Transverse colon (tissue), 4 donors: ENCODE measurements at regions of chr9 and their contacts with region 1.

Region 1: GRCh38 chr9:4640027-4640426 is 22.1 kb upstream of the PLPP6 start:
- DNase-seq: peak; percentile 14
- H3K4me3 ChIP-seq: no peak overlapping the region
- H3K27ac ChIP-seq: no peak overlapping the region
- H3K4me1 ChIP-seq: no peaks in the 10 kb centered on the region
- H3K27me3 ChIP-seq: no peaks in the 10 kb centered on the region
- CTCF ChIP-seq: peak; percentile 33 to 44 (median 40)
- EP300 ChIP-seq: no peak
- POLR2A ChIP-seq: no peak

Region 2: GRCh38 chr9:4382722-4383317 is 257.2 kb before region 1 on chr9:
- in situ Hi-C with region 1: loop called (anchors 10 to 25 kb)
- intact Hi-C with region 1: loop called (anchors 5 kb)
- DNase-seq: no peak
- H3K4me3 ChIP-seq: no peak overlapping the region
- H3K27ac ChIP-seq: no peak overlapping the region
- H3K4me1 ChIP-seq: no peaks in the 10 kb centered on the region
- H3K27me3 ChIP-seq: no peaks in the 10 kb centered on the region
- CTCF ChIP-seq: peak; percentile 39 to 59 (median 50)
- EP300 ChIP-seq: no peak
- POLR2A ChIP-seq: no peak

Region 3: DNA sequence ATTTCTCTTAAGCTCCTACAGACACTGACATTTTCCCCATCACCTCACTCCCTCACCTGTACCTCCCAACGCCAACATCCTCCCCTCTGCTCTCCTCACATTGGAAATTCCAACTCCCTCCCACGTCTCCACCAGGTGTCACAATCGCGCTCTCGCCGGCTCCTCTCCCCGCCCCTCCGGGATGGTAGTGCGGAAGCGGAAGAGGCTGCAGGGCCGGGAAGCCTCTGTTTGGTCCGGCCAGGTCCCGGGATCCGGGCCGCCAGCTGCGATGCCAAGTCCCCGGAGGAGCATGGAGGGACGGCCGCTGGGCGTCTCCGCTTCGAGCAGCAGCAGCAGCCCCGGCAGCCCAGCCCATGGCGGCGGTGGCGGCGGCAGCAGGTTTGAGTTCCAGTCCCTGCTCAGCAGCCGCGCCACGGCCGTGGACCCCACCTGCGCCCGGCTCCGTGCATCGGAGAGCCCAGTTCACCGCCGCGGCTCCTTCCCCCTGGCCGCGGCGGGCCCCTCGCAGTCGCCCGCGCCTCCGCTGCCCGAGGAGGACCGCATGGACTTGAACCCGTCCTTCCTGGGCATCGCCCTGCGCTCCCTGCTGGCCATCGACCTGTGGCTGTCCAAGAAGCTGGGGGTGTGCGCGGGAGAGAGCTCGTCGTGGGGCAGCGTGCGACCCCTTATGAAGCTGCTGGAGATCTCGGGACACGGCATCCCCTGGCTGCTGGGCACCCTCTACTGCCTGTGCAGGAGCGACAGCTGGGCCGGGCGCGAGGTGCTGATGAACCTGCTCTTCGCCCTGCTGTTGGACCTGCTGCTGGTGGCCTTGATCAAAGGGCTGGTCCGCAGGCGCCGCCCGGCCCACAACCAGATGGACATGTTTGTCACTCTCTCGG is 22.3 kb after region 1 on chr9 and contains the start of gene PLPP6:
- in situ Hi-C with region 1: no loop called
- intact Hi-C with region 1: no loop called
- DNase-seq: peak; percentile 93
- H3K4me3 ChIP-seq: peak within 1 kb of the TSS; percentile 62 to 99 (median 82)
- H3K27ac ChIP-seq: peak within 1 kb of the TSS; percentile 87 to 94 (median 92)
- H3K4me1 ChIP-seq: peaks cover 3 to 54% (median 30%) of the 10 kb centered on the region in 4 donors
- H3K27me3 ChIP-seq: no peaks in the 10 kb centered on the region
- CTCF ChIP-seq: peak; percentile 46 to 71 (median 55)
- EP300 ChIP-seq: no peak
- POLR2A ChIP-seq: peak; percentile 87
- total RNA-seq, gene PLPP6: 7.1 to 22.7 (median 16.3) TPM

Region 4: DNA sequence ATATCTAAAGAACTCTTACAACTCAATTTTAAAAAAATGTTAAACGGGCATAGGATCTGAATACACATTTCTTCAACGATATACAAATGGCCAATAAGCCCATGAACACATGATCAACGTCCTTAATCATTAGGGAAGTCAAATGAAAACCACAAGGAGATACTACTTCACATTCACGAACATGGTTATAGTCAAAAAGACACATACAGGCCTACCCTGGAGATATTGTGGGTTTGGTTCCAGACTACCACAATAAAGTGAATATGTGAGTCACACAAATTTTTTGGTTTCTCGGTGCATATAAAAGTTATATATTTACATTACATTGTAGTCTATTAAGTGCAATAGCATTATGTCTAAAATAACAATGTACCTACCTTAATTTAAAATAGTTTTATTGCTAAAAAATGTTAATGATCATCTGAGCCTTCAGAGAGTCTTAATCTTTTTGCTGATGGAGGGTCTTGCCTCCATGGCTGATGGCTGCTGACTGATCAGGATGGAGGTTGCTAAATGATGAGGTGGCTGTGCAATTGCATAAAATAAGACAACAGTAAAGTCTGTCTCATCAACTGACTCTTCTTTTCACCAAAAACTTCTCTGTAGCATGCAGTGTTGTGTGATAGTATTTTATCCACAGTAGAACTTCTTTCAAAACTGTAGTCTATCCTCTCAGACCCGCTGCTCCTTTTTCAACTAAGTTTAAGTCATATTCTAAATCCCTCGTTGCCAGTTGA is 85.8 kb after region 1 on chr9:
- in situ Hi-C with region 1: no loop called
- intact Hi-C with region 1: no loop called
- DNase-seq: no peak
- H3K4me3 ChIP-seq: no peak overlapping the region
- H3K27ac ChIP-seq: no peak overlapping the region
- H3K4me1 ChIP-seq: no peaks in the 10 kb centered on the region
- H3K27me3 ChIP-seq: no peaks in the 10 kb centered on the region
- CTCF ChIP-seq: no peak
- EP300 ChIP-seq: no peak
- POLR2A ChIP-seq: no peak

Region 5: DNA sequence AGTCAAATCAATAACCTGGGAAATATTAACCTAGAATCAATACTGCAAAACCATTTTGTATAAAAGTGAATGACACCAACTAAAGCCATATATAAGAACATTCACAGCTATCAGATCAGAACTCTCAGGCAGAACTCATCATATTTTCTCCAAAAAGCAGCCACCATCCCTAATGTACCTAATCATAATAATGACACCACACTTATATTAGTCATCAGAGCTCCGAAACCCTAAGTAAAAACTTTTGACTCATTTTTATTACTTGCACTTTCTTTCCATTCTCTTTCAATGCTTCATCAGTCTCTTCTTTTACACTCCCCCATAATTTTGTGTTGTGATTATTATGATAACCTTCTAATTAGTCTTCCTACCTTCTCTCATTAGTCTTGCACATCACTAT is 500.1 kb after region 1 on chr9:
- in situ Hi-C with region 1: no loop called
- intact Hi-C with region 1: no loop called
- DNase-seq: no peak
- H3K4me3 ChIP-seq: no peak overlapping the region
- H3K27ac ChIP-seq: no peak overlapping the region
- H3K4me1 ChIP-seq: no peaks in the 10 kb centered on the region
- H3K27me3 ChIP-seq: no peaks in the 10 kb centered on the region
- CTCF ChIP-seq: no peak
- EP300 ChIP-seq: no peak
- POLR2A ChIP-seq: no peak